Activated CD8-positive, alpha-beta memory T cell treated with anti-CD3 and anti-CD28 coated beads, Interleukin-2, amount 10 ng/mL, durations not matched to agents 7 days and 5 days (primary cell): ENCODE measurements at regions of chr5 and their contacts with region 1.

Region 1: DNA sequence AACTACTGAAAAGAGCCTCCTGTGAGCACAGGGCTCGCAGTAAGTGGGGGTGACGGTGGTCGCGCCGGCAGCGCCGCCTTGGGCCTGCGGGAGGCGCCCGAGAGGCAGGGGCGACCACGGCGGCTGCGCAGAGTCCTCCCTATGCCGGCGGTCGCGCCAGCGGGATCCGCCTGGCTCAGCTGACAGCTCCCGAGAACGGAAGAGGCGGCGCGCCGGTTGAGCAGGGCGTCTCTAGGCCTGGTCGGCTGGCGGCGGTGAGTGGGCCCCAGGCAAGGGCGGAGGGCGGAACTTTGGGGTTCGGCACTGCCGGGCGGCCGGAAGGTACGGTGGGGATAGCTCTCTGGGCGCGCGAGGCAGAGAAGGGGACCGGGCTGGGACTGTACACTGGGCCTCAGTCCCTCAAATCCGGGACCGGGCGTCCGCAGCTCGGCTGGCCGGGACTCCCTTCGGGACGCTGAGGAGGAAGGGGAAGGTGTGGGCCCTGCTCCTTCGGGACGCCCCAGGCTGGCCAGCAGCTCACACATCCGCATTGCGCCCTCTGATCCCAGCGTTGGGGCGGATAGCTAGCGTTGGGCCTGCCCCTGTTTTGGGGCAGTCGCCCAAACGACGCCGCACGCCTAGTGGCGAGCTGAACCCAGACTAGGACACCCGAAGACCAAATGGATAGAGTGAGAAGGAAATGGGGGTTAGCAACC is at the start of gene RNF14:
- DNase-seq: peak; percentile 97
- ATAC-seq: peak; percentile 97
- H3K4me3 Mint-ChIP-seq: peak within 1 kb of the TSS; percentile 88
- H3K27ac Mint-ChIP-seq: peak within 1 kb of the TSS; percentile 92
- H3K4me1 Mint-ChIP-seq: peaks cover 28% of the 10 kb centered on the region
- H3K27me3 Mint-ChIP-seq: no peaks in the 10 kb centered on the region
- total RNA-seq, gene RNF14: 23.8 to 28.2 TPM

Region 2: DNA sequence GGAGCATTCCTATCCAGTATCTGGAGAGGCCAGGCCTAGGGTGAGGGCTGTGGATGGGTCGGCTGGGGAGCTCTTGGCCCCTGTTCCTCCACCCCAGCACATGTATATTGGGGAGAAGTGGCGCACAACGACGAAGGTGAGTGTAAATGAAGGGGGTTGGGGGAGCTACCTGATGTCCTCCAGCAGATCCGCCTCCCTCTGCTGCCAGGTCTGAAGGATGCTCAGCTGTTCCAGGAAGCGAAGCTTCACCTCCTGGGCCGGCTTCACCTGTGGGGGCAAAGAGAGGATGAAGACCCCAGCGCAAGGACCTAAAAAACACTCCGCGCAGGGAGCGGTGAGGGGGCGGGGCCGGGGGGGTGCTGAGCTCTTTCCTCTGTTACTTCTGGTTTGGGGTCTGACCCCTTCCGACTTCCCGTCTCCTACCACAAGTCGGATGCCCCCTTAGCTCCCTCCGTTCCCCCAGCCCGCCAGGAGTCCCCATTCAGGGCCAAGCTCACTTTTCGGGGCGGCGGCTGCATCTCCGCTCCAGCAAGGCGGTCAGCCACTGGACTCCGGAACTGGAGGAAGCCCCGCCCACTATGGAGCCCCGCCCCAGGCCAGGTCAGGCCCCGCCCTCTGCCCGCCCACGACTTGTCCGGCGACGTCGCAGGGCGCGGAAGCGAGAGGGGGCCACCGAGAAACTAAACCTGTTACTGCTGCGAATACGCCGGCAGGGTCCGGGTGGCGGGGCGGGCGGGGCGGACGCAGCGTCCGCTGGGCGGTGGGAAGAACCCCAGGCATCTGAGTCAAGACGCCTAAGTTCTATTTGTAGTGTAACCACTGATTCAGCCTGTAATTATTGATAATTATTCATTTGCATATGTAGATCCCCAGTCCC is 318.0 kb before region 1 on chr5 and contains the start of gene FCHSD1:
- CTCF ChIA-PET with region 1: interaction called, 13 read pairs
- DNase-seq: peak; percentile 92
- ATAC-seq: peak; percentile 98
- H3K4me3 Mint-ChIP-seq: peak within 1 kb of the TSS; percentile 93
- H3K27ac Mint-ChIP-seq: peak within 1 kb of the TSS; percentile 95
- H3K4me1 Mint-ChIP-seq: peaks cover 27% of the 10 kb centered on the region
- H3K27me3 Mint-ChIP-seq: no peaks in the 10 kb centered on the region
- total RNA-seq, gene FCHSD1: 46.5 to 64.1 TPM

Region 3: GRCh38 chr5:141878711-141879425 is 90.2 kb before region 1 on chr5:
- CTCF ChIA-PET with region 1: interaction called, 15 read pairs
- DNase-seq: peak; percentile 91
- ATAC-seq: peak; percentile 88
- H3K4me3 Mint-ChIP-seq: peak overlapping the region; percentile 38
- H3K27ac Mint-ChIP-seq: peak overlapping the region; percentile 8
- H3K4me1 Mint-ChIP-seq: peaks cover 22% of the 10 kb centered on the region
- H3K27me3 Mint-ChIP-seq: peaks cover 88% of the 10 kb centered on the region

Region 4: DNA sequence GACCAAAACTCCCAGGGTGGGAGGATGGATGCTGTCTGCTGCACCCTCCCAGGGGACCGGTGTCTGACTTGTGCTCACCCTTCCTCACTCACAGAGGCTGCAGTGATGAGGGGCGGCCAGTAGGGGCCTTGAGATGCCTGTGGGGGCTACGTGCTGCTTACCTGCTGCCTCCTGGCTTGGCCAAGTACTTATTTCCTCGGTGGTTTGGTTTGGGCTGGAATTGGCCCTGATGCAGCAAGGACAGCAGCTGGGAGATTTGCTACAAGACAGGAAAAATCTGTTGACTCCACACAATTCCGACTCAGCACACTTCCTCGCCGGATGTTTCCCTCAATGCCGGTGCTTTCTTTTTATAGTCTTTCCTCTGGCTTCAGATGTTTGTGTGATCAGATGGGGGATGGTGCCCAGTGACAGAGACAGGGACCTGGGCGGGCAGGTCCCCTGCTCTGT is 17.7 kb before region 1 on chr5:
- CTCF ChIA-PET with region 1: interaction called, 103 read pairs
- DNase-seq: peak; percentile 51
- ATAC-seq: peak; percentile 70
- H3K4me3 Mint-ChIP-seq: peak overlapping the region; percentile 2
- H3K27ac Mint-ChIP-seq: no peak overlapping the region
- H3K4me1 Mint-ChIP-seq: peaks cover 14% of the 10 kb centered on the region
- H3K27me3 Mint-ChIP-seq: no peaks in the 10 kb centered on the region

Region 5: GRCh38 chr5:142012792-142013388 is 43.8 kb after region 1 on chr5 and contains the start of gene GNPDA1:
- CTCF ChIA-PET with region 1: interaction called, 19 read pairs
- DNase-seq: peak; percentile 74
- ATAC-seq: peak; percentile 59
- H3K4me3 Mint-ChIP-seq: peak within 1 kb of the TSS; percentile 74
- H3K27ac Mint-ChIP-seq: peak within 1 kb of the TSS; percentile 81
- H3K4me1 Mint-ChIP-seq: peaks cover 57% of the 10 kb centered on the region
- H3K27me3 Mint-ChIP-seq: peaks cover 14% of the 10 kb centered on the region
- total RNA-seq, gene GNPDA1: 7.7 to 10.0 TPM

Region 6: DNA sequence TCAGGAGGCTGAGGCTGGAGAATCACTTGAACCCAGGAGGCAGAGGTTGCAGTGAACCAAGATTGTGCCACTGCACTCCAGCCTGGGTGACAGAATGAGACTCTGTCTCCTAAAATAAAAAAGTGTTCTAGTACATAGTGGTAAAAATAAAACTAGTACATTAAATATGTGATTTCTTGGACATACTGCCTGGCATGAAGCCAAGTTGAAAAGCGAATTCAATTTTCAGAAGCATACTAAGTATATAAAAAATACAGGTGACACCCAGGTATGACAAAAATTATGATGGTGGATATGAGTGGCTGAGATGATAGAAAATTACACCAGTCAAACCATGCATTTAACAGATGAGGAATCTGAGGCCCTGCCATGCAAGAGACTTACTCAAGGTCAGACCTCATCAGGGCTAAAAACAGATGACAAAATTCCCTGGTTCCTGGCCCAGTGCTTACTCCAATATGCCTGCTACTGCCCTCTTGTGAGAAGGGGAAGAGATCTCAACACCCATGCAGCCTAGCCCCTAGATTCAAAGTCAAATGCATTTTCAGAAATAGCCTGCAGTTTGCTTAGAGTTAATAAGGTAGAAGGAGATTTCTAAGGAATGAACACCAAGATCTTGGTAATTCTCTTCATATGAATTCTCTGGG is 90.4 kb after region 1 on chr5:
- CTCF ChIA-PET with region 1: no interaction called
- DNase-seq: no peak
- ATAC-seq: no peak
- H3K4me3 Mint-ChIP-seq: no peak overlapping the region
- H3K27ac Mint-ChIP-seq: no peak overlapping the region
- H3K4me1 Mint-ChIP-seq: peaks cover 9% of the 10 kb centered on the region
- H3K27me3 Mint-ChIP-seq: no peaks in the 10 kb centered on the region